ENCODE measurements at regions of chr21 and their contacts with region 1.

Region 1: GRCh38 chr21:36927719-36928117 is 38.8 kb downstream of the HLCS start:
- DNase-seq: peak; percentile 82 to 91 (median 87)
- H3K4me3 ChIP-seq: no peak overlapping the region
- H3K27ac ChIP-seq: peak overlapping the region in 1 of 2 donors; percentile 2
- H3K4me1 ChIP-seq: peaks cover 7% of the 10 kb centered on the region
- H3K27me3 ChIP-seq: no peaks in the 10 kb centered on the region
- CTCF ChIP-seq: peak; percentile 67 to 92 (median 78)
- EP300 ChIP-seq: no peak
- POLR2A ChIP-seq: no peak

Region 2: GRCh38 chr21:36419996-36420395 is 507.7 kb before region 1 on chr21:
- intact Hi-C with region 1: loop called in 2 of 4 experiments (anchors 5 to 10 kb)
- DNase-seq: peak; percentile 76 to 86 (median 80)
- H3K4me3 ChIP-seq: no peak overlapping the region
- H3K27ac ChIP-seq: no peak overlapping the region
- H3K4me1 ChIP-seq: no peaks in the 10 kb centered on the region
- H3K27me3 ChIP-seq: no peaks in the 10 kb centered on the region
- CTCF ChIP-seq: peak; percentile 66 to 72 (median 70)
- EP300 ChIP-seq: no peak
- POLR2A ChIP-seq: no peak

Region 3: DNA sequence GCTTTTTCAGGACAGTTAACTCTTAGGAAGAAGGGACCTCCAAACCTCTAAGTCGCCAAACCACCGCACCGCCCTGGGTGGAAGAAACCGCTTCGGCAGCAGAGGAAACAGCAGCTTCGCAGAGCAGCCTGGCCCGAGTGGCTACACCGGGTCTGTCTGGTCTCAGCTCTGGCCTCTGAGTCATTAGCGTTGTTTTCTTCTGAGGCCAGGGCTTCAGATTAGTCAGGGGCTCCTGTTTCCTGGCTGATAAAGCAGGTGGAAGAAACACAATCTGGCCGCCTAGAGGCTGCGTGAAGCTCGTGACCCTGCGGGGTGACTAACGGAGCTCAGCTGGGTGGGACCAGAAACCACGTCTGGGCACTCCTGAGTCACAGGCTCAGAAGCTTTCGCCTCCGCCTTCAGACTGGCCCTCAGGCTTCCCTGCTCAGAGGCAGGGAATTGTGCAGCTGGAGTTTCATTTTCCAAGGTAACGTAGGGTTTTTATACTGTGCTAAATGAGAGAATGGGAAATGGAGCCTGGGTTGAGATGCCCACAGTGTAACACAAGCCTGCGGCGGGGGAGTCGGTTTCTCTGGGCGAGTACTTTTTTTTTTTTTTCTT is 497.7 kb before region 1 on chr21:
- intact Hi-C with region 1: loop called in 1 of 4 experiments (anchors 10 kb)
- DNase-seq: peak; percentile 79 to 91 (median 81)
- H3K4me3 ChIP-seq: peak overlapping the region; percentile 27
- H3K27ac ChIP-seq: peak overlapping the region in 1 of 2 donors; percentile 69
- H3K4me1 ChIP-seq: peaks cover 7% of the 10 kb centered on the region
- H3K27me3 ChIP-seq: no peaks in the 10 kb centered on the region
- CTCF ChIP-seq: peak in 2 of 3 donors; percentile 44 to 47
- EP300 ChIP-seq: peak; percentile 49
- POLR2A ChIP-seq: peak; percentile 18

Region 4: DNA sequence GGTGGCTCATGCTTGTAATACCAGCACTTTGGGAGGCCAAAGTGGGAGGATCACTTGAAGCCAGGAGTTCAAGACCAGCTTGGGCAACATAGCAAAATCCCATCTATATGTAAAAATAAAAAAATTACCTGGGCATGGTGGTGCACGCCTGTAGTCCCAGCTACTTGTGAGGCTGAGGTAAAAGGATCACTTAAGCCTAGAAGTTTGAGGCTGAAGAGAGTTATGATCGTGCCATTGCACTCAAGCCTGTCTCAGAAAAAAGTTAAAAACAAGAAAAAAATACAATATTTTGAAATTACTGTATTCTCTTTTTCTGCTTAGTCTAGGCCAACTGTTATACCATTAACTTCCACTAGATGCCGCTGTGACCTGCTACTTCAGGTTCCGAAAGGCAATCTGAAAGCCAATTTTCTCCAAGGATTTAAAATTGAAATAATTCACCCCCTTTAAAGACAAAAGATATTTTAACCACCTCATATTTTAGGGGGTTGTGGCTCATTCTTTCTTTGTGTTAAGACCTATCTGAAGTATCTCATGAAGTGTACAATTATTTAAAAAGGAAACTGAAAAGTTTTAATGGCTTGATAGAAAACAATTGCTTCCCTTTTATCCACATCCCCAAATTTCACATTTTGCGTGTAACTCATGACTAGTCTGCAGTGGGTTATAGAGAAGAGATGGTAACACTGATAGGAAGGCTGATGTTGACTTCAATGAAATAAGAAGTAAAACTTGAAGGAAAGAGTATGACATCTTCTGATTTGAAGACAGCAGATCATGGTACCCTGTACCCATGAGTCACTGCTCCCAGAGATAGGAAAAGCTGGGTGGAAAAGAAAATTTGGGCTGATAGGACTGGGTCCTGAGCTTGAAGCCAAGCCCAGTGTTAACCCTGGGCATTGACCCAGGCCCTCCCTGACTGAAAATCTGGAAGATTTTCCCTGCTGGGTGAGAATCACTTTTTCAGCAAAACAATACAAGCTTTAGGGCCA is 423.4 kb before region 1 on chr21:
- intact Hi-C with region 1: loop called in 3 of 4 experiments (anchors 5 kb)
- DNase-seq: peak in 2 of 5 donors; percentile 29 to 47
- H3K4me3 ChIP-seq: no peak overlapping the region
- H3K27ac ChIP-seq: no peak overlapping the region
- H3K4me1 ChIP-seq: no peaks in the 10 kb centered on the region
- H3K27me3 ChIP-seq: no peaks in the 10 kb centered on the region
- CTCF ChIP-seq: peak; percentile 68 to 89 (median 82)
- EP300 ChIP-seq: no peak
- POLR2A ChIP-seq: no peak

Region 5: GRCh38 chr21:36747815-36748383 is 179.8 kb before region 1 on chr21:
- intact Hi-C with region 1: loop called in 1 of 4 experiments (anchors 5 kb)
- DNase-seq: peak in 1 of 5 donors; percentile 56
- H3K4me3 ChIP-seq: peak overlapping the region; percentile 10
- H3K27ac ChIP-seq: no peak overlapping the region
- H3K4me1 ChIP-seq: no peaks in the 10 kb centered on the region
- H3K27me3 ChIP-seq: no peaks in the 10 kb centered on the region
- CTCF ChIP-seq: no peak
- EP300 ChIP-seq: no peak
- POLR2A ChIP-seq: no peak

Measured in ovary (tissue), 10 donors.